GM12878 (cell line): ENCODE measurements at regions of chr2 and their contacts with region 1.

Region 1: GRCh38 chr2:64203858-64204632 is 59.8 kb upstream of the PELI1 start:
- DNase-seq: peak; percentile 88
- ATAC-seq: peak; percentile 76
- H3K4me3 ChIP-seq: peak overlapping the region; percentile 9; the same call in 1 of the 2 replicates
- H3K27ac ChIP-seq: peak overlapping the region; percentile 75
- H3K4me1 ChIP-seq: peaks cover 50% of the 10 kb centered on the region
- H3K27me3 ChIP-seq: no peaks in the 10 kb centered on the region
- CTCF ChIP-seq: no peak
- EP300 ChIP-seq: peak; percentile 38 to 80; a peak in 2 of 4 replicates
- POLR2A ChIP-seq: peak; percentile 68
- RAD21 ChIP-seq: no peak

Region 2: GRCh38 chr2:63712748-63713147 is 491.3 kb before region 1 on chr2:
- CTCF ChIA-PET with region 1: no interaction called
- POLR2A ChIA-PET with region 1: no interaction called
- RAD21 ChIA-PET with region 1: no interaction called
- SMC1A ChIA-PET with region 1: no interaction called
- in situ Hi-C with region 1: no loop called
- intact Hi-C with region 1: no loop called
- DNase-seq: no peak
- ATAC-seq: no peak
- H3K4me3 ChIP-seq: no peak overlapping the region
- H3K27ac ChIP-seq: no peak overlapping the region
- H3K4me1 ChIP-seq: no peaks in the 10 kb centered on the region
- H3K27me3 ChIP-seq: no peaks in the 10 kb centered on the region
- CTCF ChIP-seq: no peak
- EP300 ChIP-seq: no peak
- POLR2A ChIP-seq: no peak
- RAD21 ChIP-seq: no peak

Region 3: DNA sequence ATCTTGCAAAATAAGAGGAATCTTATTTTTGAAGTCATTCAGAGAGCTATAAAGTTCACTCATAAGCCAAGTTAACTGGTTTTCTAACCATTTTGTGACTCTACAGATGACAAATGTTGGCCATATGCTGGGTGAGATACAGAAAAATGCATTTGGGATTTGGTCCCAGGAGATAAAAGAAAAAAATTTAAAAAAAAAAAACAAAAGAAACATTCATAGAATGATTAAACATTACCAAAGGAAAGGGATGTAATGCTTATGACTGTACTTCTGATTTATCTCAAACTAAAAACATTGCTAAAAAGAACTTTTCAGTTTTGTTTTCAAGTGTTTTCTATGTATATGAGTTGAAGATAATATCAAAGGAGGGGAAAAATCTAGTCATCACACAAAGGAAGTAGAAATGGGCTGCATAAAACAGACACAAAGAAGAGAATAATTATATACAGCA is 102.9 kb before region 1 on chr2:
- CTCF ChIA-PET with region 1: no interaction called
- POLR2A ChIA-PET with region 1: interaction called, 6 read pairs
- RAD21 ChIA-PET with region 1: interaction called, 16 read pairs
- SMC1A ChIA-PET with region 1: interaction called, 3 read pairs
- in situ Hi-C with region 1: no loop called
- intact Hi-C with region 1: no loop called
- DNase-seq: no peak
- ATAC-seq: peak; percentile 68
- H3K4me3 ChIP-seq: peak overlapping the region; percentile 26; the same call in 1 of the 2 replicates
- H3K27ac ChIP-seq: peak overlapping the region; percentile 80
- H3K4me1 ChIP-seq: peaks cover 46% of the 10 kb centered on the region
- H3K27me3 ChIP-seq: no peaks in the 10 kb centered on the region
- CTCF ChIP-seq: no peak
- EP300 ChIP-seq: no peak
- POLR2A ChIP-seq: no peak
- RAD21 ChIP-seq: no peak

Region 4: DNA sequence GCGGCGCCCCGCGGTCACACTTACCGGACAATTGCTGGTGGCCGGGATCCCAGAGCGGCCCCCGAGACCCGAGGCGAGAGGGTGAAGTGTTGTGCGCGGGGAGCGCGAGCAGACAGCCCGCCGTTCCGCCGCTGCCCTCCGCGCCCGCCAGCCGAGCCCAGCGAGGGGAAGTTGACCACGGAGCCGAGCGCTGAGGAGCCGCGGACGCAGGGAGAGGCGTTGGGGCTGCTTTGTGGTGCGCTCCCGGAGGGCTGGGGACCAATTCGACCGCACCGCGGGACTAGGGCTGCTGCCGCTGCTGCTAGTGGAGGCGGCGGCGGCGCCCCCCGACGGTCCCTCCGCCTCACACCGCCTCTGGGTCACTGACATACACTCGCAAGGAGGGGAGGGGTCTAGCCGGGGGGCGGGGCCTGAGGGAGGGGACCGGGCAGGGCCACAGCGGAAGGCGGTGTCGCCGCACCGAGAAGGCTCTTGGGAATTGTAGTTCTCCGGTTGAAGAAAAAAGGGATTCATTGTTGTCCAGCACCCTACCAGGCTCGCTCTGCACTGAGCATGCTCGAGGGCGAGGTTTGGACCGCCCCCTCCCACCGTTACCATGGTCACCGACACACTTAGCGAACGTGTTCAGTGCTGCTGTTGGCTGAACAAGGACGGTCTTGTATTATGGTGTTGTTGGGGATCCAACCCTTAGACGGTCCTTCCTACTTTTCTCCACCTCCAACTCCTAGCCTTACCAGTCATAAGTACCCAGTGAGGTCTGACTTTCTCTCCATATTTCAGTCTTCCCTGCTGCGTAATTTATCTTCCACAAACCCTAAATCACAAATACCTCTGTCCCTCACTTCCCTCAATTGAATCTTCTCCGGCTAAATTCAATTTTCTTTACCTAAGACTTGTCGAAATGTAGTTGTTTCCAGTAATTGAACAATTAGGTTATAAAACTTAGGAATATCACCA is 59.7 kb before region 1 on chr2 and contains the start of gene PELI1:
- CTCF ChIA-PET with region 1: interaction called, 4 read pairs
- POLR2A ChIA-PET with region 1: interaction called, 27 read pairs
- RAD21 ChIA-PET with region 1: interaction called, 35 read pairs
- SMC1A ChIA-PET with region 1: interaction called, 22 read pairs
- in situ Hi-C with region 1: no loop called
- intact Hi-C with region 1: loop called (anchors 2 kb)
- DNase-seq: peak; percentile 96
- ATAC-seq: peak; percentile 86
- H3K4me3 ChIP-seq: peak within 1 kb of the TSS; percentile 95
- H3K27ac ChIP-seq: peak within 1 kb of the TSS; percentile 85
- H3K4me1 ChIP-seq: peaks cover 3% of the 10 kb centered on the region
- H3K27me3 ChIP-seq: no peaks in the 10 kb centered on the region
- CTCF ChIP-seq: peak; percentile 13 to 49 (median 34); a peak in 3 of 6 replicates
- EP300 ChIP-seq: no peak
- POLR2A ChIP-seq: peak; percentile 97
- RAD21 ChIP-seq: peak; percentile 36; the same call in 1 of the 2 replicates
- polyA plus RNA-seq, gene PELI1: 12.1 to 13.2 TPM

Region 5: DNA sequence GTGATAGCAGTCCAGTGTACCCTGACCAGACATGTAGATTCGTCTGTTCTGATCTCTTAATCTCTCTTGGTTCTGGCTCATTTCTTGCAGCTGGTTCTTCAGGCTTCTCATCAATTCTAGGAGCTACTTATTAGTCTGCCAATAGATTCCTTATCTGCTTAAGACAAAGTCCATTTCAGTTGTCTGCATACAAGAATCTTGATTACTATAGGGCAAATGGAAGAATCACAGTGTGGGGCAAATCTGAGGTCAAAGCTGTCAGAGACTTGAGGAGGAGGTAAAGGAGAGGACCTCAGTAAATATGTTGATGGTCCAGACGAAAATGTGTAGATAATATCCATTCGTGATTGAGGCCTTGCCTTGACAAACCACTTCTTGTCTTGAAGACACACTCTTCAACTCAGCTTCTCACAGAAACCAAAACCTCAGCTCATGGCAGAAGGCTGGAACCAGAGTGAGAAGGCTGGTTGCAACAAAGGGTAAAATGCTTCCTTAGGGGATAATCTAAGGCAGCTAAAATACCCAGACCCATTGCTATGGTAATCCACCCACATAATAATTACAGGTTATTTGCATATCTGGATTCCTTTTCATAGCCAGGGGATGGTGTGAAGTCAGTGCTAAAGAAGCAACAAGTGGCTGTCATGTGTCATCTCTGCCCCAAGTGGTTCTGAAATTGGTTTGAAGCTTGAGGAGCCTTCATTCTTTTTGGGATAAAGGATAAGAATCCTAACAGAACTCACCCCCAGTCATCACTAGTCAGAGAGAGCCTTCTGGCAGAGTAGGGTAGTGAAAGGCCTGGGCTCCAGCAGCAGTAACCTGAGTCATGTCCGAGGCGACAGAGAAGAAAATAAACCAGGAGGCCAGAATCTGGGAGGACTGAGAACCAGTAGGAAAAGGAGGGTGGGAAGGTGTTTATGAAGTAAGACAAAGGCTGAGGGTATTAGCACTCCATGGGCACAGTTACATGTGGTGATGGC is 30.6 kb before region 1 on chr2:
- CTCF ChIA-PET with region 1: interaction called, 6 read pairs
- POLR2A ChIA-PET with region 1: interaction called, 10 read pairs
- RAD21 ChIA-PET with region 1: interaction called, 4 read pairs
- SMC1A ChIA-PET with region 1: interaction called, 30 read pairs
- in situ Hi-C with region 1: no loop called
- intact Hi-C with region 1: no loop called
- DNase-seq: no peak
- ATAC-seq: peak; percentile 64
- H3K4me3 ChIP-seq: no peak overlapping the region
- H3K27ac ChIP-seq: no peak overlapping the region
- H3K4me1 ChIP-seq: peaks cover 7% of the 10 kb centered on the region; the same call in 1 of the 2 replicates
- H3K27me3 ChIP-seq: no peaks in the 10 kb centered on the region
- CTCF ChIP-seq: no peak
- EP300 ChIP-seq: no peak
- POLR2A ChIP-seq: no peak
- RAD21 ChIP-seq: no peak

Region 6: DNA sequence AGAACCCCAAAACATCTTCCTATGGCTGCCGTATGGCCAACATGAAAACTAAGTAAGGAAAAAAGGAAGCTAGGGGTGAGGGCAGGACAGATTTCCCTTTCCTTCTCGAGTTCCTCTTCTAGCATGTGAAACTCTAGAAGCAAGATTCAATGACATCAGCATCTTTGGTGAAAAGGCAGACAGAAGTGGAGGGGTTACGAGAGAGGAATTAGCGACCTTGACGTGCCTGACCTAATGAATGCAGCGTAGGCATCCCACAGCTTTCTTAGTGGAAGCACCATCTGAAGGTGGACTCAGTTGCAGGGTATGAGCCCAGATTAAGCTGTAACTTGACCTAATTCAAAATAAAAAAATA is 11.9 kb before region 1 on chr2:
- CTCF ChIA-PET with region 1: interaction called, 3 read pairs
- POLR2A ChIA-PET with region 1: interaction called, 11 read pairs
- RAD21 ChIA-PET with region 1: interaction called, 7 read pairs
- SMC1A ChIA-PET with region 1: interaction called, 30 read pairs
- in situ Hi-C with region 1: no loop called
- intact Hi-C with region 1: no loop called
- DNase-seq: no peak
- ATAC-seq: peak; percentile 68
- H3K4me3 ChIP-seq: no peak overlapping the region
- H3K27ac ChIP-seq: no peak overlapping the region
- H3K4me1 ChIP-seq: peaks cover 26% of the 10 kb centered on the region
- H3K27me3 ChIP-seq: no peaks in the 10 kb centered on the region
- CTCF ChIP-seq: no peak
- EP300 ChIP-seq: no peak
- POLR2A ChIP-seq: no peak
- RAD21 ChIP-seq: no peak

Region 7: GRCh38 chr2:64263309-64263708 is 59.3 kb after region 1 on chr2:
- CTCF ChIA-PET with region 1: no interaction called
- POLR2A ChIA-PET with region 1: no interaction called
- RAD21 ChIA-PET with region 1: no interaction called
- SMC1A ChIA-PET with region 1: no interaction called
- in situ Hi-C with region 1: no loop called
- intact Hi-C with region 1: no loop called
- DNase-seq: no peak
- ATAC-seq: no peak
- H3K4me3 ChIP-seq: no peak overlapping the region
- H3K27ac ChIP-seq: no peak overlapping the region
- H3K4me1 ChIP-seq: peaks cover 10% of the 10 kb centered on the region
- H3K27me3 ChIP-seq: no peaks in the 10 kb centered on the region
- CTCF ChIP-seq: no peak
- EP300 ChIP-seq: no peak
- POLR2A ChIP-seq: no peak
- RAD21 ChIP-seq: no peak

Region 8: DNA sequence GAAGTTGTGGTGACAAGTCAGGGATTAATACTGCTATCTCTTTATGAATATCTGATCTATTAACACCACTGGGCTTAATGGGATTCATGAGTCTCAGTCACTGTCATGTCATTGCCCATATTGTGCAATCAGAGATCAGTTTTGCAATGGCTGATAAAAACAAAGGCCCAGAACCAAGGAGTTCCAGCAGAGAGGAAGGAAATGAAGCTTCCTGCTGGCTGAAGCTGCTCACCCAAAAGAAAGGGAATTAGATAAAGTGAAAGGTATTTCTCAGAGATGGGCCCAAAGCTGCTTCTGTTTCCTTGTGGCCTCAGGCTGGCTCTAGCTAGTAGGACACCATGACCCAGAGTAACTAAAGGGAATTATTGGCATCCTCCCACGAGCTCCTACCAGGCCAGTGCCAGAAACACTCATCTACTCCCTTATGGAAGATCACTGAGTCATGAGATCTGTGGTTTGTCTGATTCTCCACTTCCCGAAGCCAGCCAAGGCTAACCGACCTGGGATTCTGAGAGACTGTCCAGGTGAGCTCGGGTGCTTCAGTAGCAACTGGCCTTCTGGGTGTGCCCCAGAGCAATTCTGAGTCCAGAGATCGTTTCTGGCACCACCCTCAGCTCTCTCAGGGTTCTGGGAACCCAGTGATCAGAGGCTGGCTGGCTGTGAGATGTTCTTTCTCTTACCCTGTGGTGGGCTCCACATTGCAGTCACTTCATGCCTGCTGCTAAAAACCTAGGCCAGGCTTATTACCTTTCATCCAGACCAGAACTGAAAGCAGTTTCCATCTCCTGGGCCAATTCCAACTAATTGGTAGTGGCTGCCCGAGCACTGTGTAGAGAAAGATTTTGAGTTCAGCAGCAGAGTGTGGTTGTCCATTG is 69.7 kb after region 1 on chr2:
- CTCF ChIA-PET with region 1: no interaction called
- POLR2A ChIA-PET with region 1: no interaction called
- RAD21 ChIA-PET with region 1: no interaction called
- SMC1A ChIA-PET with region 1: no interaction called
- in situ Hi-C with region 1: no loop called
- intact Hi-C with region 1: no loop called
- DNase-seq: no peak
- ATAC-seq: peak; percentile 31
- H3K4me3 ChIP-seq: no peak overlapping the region
- H3K27ac ChIP-seq: no peak overlapping the region
- H3K4me1 ChIP-seq: no peaks in the 10 kb centered on the region
- H3K27me3 ChIP-seq: no peaks in the 10 kb centered on the region
- CTCF ChIP-seq: no peak
- EP300 ChIP-seq: no peak
- POLR2A ChIP-seq: no peak
- RAD21 ChIP-seq: no peak

Region 9: DNA sequence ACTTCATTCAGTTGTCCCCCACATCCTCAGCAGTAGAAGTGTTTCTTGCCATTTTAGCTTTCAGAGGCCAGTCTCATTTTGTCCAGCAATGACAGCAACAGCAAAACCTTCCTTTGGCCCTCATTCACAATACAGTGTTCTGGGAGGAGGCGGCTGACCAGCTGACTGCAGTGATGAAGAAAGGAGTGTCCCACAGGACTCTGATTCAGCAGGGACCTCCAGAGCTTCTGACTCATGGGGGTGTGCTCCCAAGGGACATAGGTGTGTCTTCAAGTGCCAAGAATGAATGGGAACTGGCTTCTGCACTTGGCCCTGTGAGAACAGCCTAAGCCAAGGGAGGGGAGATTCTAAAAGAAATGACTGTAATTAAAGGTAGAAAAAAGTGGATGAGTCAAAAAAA is 87.1 kb after region 1 on chr2:
- CTCF ChIA-PET with region 1: interaction called, 3 read pairs
- POLR2A ChIA-PET with region 1: interaction called, 3 read pairs
- RAD21 ChIA-PET with region 1: interaction called, 19 read pairs
- SMC1A ChIA-PET with region 1: interaction called, 14 read pairs
- in situ Hi-C with region 1: no loop called
- intact Hi-C with region 1: no loop called
- DNase-seq: no peak
- ATAC-seq: no peak
- H3K4me3 ChIP-seq: no peak overlapping the region
- H3K27ac ChIP-seq: no peak overlapping the region
- H3K4me1 ChIP-seq: peaks cover 12% of the 10 kb centered on the region
- H3K27me3 ChIP-seq: no peaks in the 10 kb centered on the region
- CTCF ChIP-seq: no peak
- EP300 ChIP-seq: no peak
- POLR2A ChIP-seq: no peak
- RAD21 ChIP-seq: no peak

Region 10: GRCh38 chr2:64318476-64318748 is 114.4 kb after region 1 on chr2:
- CTCF ChIA-PET with region 1: interaction called, 10 read pairs
- POLR2A ChIA-PET with region 1: interaction called, 4 read pairs
- RAD21 ChIA-PET with region 1: interaction called, 12 read pairs
- SMC1A ChIA-PET with region 1: interaction called, 44 read pairs
- in situ Hi-C with region 1: no loop called
- intact Hi-C with region 1: no loop called
- DNase-seq: no peak
- ATAC-seq: peak; percentile 83
- H3K4me3 ChIP-seq: no peak overlapping the region
- H3K27ac ChIP-seq: no peak overlapping the region
- H3K4me1 ChIP-seq: peaks cover 13% of the 10 kb centered on the region
- H3K27me3 ChIP-seq: no peaks in the 10 kb centered on the region
- CTCF ChIP-seq: no peak
- EP300 ChIP-seq: 0 out of 4 replicates have a peak, but pooled peaks of 1 of the 2 experiments have one; percentile 13
- POLR2A ChIP-seq: no peak
- RAD21 ChIP-seq: no peak